Endothelial cell of umbilical vein (primary cell): ENCODE measurements at regions of chr4 and their contacts with region 1.

Region 1: GRCh38 chr4:109433205-109434006 is at the start of gene SEC24B:
- DNase-seq: peak; percentile 84
- H3K4me3 ChIP-seq: peak within 1 kb of the TSS; percentile 59 to 96 (median 92)
- H3K27ac ChIP-seq: peak within 1 kb of the TSS; percentile 93
- H3K4me1 ChIP-seq: peaks cover 44% of the 10 kb centered on the region
- H3K27me3 ChIP-seq: no peaks in the 10 kb centered on the region
- CTCF ChIP-seq: peak; percentile 70 to 97
- POLR2A ChIP-seq: peak; percentile 94
- total RNA-seq, gene SEC24B: 34.6 and 35.9 TPM in 2 replicates

Region 2: DNA sequence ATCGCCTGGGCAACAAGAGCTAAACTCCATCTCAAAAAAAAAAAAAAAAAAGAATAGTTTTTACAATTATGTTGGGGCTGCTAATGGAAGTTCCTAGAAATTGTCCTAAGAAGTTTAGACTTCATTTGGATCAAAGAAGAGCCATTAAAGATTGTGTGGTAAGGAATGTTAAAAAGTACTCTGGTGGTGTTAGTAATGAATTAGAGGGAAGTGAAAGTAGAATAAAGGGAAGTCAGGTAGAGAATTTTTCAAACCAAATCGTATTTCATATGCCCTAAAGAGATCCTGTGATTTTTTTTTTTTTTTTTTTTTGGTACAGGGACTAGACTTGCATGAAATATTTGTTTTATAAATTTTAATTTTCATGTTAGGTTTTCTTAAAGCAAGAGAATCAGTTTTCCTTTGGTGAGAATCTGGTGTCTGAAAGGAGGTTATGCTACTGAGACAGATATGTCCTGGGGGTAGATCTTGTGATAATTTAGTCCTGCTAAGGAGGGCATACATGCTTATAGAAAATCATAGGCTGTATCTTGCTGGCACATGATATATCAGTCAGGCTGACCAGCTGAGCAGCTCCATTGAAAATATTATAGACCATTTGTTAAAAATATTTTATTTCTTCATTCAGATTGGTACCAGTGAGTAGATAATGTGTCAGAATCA is 10.9 kb after region 1 on chr4:
- CTCF ChIA-PET with region 1: interaction called, 16 read pairs
- POLR2A ChIA-PET with region 1: no interaction called
- dilution Hi-C with region 1: no loop called
- intact Hi-C with region 1: no loop called
- DNase-seq: no peak
- H3K4me3 ChIP-seq: no peak overlapping the region
- H3K27ac ChIP-seq: no peak overlapping the region
- H3K4me1 ChIP-seq: peaks cover 11% of the 10 kb centered on the region
- H3K27me3 ChIP-seq: no peaks in the 10 kb centered on the region
- CTCF ChIP-seq: no peak
- POLR2A ChIP-seq: no peak

Region 3: GRCh38 chr4:109574102-109574850 is 140.9 kb after region 1 on chr4:
- CTCF ChIA-PET with region 1: interaction called, 21 read pairs
- POLR2A ChIA-PET with region 1: no interaction called
- dilution Hi-C with region 1: no loop called
- intact Hi-C with region 1: loop called (anchors 1 kb)
- DNase-seq: peak; percentile 40
- H3K4me3 ChIP-seq: no peak overlapping the region
- H3K27ac ChIP-seq: no peak overlapping the region
- H3K4me1 ChIP-seq: peaks cover 19% of the 10 kb centered on the region
- H3K27me3 ChIP-seq: no peaks in the 10 kb centered on the region
- CTCF ChIP-seq: peak in 1 of 2 donors; percentile 2
- POLR2A ChIP-seq: no peak

Region 4: GRCh38 chr4:109702950-109703663 is 269.7 kb after region 1 on chr4 and contains the start of gene CASP6:
- CTCF ChIA-PET with region 1: interaction called, 14 read pairs
- POLR2A ChIA-PET with region 1: no interaction called
- dilution Hi-C with region 1: no loop called
- intact Hi-C with region 1: loop called (anchors 2 kb)
- DNase-seq: peak; percentile 80
- H3K4me3 ChIP-seq: peak within 1 kb of the TSS; percentile 81 to 93 (median 83)
- H3K27ac ChIP-seq: peak within 1 kb of the TSS; percentile 72
- H3K4me1 ChIP-seq: peaks cover 14% of the 10 kb centered on the region
- H3K27me3 ChIP-seq: no peaks in the 10 kb centered on the region
- CTCF ChIP-seq: peak; percentile 69 to 81
- POLR2A ChIP-seq: peak; percentile 67
- total RNA-seq, gene CASP6: 35.4 and 37.0 TPM in 2 replicates

Region 5: DNA sequence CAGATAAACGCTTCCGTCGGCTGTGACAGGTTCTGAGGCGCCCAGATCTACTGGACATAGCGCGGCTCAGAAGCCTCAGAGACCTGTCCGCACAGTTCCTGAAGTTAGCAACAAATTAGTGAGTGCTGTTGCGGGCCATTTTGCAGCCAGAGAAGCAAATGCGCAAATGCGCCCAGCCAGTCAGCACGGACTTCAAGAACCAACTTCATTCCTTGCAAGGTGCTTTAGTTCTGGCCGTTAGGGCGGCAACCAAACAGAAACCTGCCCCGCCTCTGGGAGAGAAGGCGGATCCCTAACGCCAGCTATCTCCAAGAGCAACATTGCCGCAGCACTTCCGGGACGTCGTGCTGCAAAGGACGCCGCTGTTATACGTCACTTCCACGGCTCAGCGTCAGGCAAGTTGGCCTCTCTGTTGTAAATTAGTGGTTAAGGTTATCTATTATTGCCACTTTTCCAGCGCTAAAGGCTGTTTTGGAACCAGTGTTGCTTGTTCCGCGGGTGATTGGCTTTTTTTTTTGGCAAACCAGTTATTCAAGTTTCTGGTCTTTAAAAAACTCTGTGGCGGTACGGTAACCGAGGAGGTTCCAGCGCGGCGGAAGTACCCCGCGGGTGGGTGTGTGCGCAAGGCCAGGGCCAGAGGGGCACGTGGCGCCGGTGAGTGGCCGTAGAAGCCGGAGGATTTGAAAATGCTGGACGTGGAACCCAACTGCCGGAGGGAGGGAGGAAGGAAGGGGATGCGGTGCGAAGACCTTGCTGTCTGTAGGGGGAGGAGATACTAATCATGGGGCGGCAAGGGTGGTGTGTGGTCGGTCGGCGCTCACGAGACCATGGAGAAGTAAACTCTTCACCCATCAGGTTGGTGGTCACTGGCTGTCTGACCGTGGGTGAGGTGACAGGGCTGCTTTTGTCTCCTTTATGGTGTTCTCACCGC is 382.0 kb after region 1 on chr4 and contains the start of gene GAR1:
- CTCF ChIA-PET with region 1: interaction called, 5 read pairs
- POLR2A ChIA-PET with region 1: no interaction called
- dilution Hi-C with region 1: no loop called
- intact Hi-C with region 1: loop called (anchors 1 kb)
- DNase-seq: peak; percentile 94
- H3K4me3 ChIP-seq: peak within 1 kb of the TSS; percentile 35 to 92 (median 70)
- H3K27ac ChIP-seq: peak within 1 kb of the TSS; percentile 67
- H3K4me1 ChIP-seq: peaks cover 13% of the 10 kb centered on the region
- H3K27me3 ChIP-seq: no peaks in the 10 kb centered on the region
- CTCF ChIP-seq: no peak
- POLR2A ChIP-seq: peak; percentile 52
- total RNA-seq, gene GAR1: 27.7 and 29.1 TPM in 2 replicates

Region 6: DNA sequence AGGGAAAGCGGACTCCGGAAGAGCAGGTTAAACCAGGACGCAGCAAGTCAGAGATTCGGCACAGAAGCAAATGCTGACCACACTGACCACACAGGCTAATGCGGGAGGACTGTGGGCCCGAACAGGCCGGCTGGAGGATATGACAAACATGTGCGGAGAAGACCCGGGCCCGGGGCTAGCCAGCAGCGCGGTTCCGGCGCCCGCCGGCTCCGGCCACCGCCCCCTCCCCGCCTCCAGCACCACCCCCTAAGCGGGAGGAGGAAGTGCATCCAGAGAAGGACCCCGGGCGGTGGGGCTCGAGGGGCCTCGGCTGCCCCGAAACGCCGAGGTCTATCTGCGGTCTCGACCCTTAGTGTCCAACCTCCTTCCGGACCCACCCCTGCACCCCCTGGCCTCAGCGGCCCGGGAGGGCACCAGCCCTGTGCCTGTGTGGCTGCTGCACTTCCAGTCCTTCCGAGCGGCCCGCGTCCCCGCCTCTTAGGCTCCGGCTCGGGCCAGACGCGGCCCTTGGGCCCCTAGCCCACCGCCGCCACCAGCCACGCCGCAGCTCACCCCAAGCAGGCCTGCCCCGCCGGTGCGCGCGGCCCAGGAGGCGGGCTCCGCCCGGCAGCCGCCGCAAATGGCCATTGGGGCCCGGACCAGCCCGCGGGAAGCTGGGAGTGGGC is 762.9 kb after region 1 on chr4:
- CTCF ChIA-PET with region 1: no interaction called
- POLR2A ChIA-PET with region 1: no interaction called
- dilution Hi-C with region 1: no loop called
- intact Hi-C with region 1: loop called (anchors 1 kb)
- DNase-seq: peak; percentile 55
- H3K4me3 ChIP-seq: peak overlapping the region; percentile 78 to 95 (median 91)
- H3K27ac ChIP-seq: peak overlapping the region; percentile 46
- H3K4me1 ChIP-seq: peaks cover 23% of the 10 kb centered on the region
- H3K27me3 ChIP-seq: no peaks in the 10 kb centered on the region
- CTCF ChIP-seq: no peak
- POLR2A ChIP-seq: peak; percentile 20